WTC11 (cell line): ENCODE measurements at regions of chr3 and their contacts with region 1.

Region 1: GRCh38 chr3:122942937-122943827 is 84.4 kb downstream of the SEMA5B start:
- DNase-seq: peak; percentile 91
- ATAC-seq: peak; percentile 94
- H3K4me3 Mint-ChIP-seq: no peak overlapping the region
- H3K27ac Mint-ChIP-seq: no peak overlapping the region
- H3K4me1 Mint-ChIP-seq: peaks cover 12% of the 10 kb centered on the region
- H3K27me3 Mint-ChIP-seq: peaks cover 7% of the 10 kb centered on the region
- CTCF ChIP-seq: peak; percentile 90

Region 2: GRCh38 chr3:122754929-122755328 is 188.3 kb before region 1 on chr3:
- CTCF ChIA-PET with region 1: interaction called, 15 read pairs
- POLR2A ChIA-PET with region 1: no interaction called
- DNase-seq: no peak
- ATAC-seq: peak; percentile 100
- H3K4me3 Mint-ChIP-seq: no peak overlapping the region
- H3K27ac Mint-ChIP-seq: no peak overlapping the region
- H3K4me1 Mint-ChIP-seq: 0 out of 2 replicates have a peak, but pooled peaks cover 2% of the 10 kb centered on the region
- H3K27me3 Mint-ChIP-seq: no peaks in the 10 kb centered on the region
- CTCF ChIP-seq: peak; percentile 67

Region 3: GRCh38 chr3:122826278-122826677 is 116.9 kb before region 1 on chr3:
- CTCF ChIA-PET with region 1: no interaction called
- POLR2A ChIA-PET with region 1: no interaction called
- DNase-seq: no peak
- ATAC-seq: no peak
- H3K4me3 Mint-ChIP-seq: no peak overlapping the region
- H3K27ac Mint-ChIP-seq: no peak overlapping the region
- H3K4me1 Mint-ChIP-seq: no peaks in the 10 kb centered on the region
- H3K27me3 Mint-ChIP-seq: no peaks in the 10 kb centered on the region
- CTCF ChIP-seq: no peak

Region 4: DNA sequence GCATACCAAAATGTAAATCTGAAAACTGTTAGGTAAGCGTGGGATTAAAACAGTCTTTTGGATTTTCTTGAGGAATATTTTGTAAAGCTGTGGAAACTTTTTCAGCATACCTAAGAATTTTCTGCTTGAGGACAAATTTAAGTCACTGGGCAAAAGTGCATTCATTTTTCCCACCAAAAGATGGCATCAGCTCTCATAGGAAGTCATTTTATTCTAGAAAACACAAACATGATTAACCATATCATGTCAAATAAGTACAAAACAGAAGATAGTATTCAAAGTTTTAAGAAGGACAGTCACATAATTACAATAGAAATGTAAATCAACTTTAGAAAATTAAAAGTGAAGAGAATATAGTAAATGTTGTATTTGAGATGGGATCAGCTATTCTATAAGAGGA is 84.8 kb before region 1 on chr3:
- CTCF ChIA-PET with region 1: no interaction called
- POLR2A ChIA-PET with region 1: no interaction called
- DNase-seq: no peak
- ATAC-seq: no peak
- H3K4me3 Mint-ChIP-seq: no peak overlapping the region
- H3K27ac Mint-ChIP-seq: no peak overlapping the region
- H3K4me1 Mint-ChIP-seq: no peaks in the 10 kb centered on the region
- H3K27me3 Mint-ChIP-seq: no peaks in the 10 kb centered on the region
- CTCF ChIP-seq: no peak

Region 5: DNA sequence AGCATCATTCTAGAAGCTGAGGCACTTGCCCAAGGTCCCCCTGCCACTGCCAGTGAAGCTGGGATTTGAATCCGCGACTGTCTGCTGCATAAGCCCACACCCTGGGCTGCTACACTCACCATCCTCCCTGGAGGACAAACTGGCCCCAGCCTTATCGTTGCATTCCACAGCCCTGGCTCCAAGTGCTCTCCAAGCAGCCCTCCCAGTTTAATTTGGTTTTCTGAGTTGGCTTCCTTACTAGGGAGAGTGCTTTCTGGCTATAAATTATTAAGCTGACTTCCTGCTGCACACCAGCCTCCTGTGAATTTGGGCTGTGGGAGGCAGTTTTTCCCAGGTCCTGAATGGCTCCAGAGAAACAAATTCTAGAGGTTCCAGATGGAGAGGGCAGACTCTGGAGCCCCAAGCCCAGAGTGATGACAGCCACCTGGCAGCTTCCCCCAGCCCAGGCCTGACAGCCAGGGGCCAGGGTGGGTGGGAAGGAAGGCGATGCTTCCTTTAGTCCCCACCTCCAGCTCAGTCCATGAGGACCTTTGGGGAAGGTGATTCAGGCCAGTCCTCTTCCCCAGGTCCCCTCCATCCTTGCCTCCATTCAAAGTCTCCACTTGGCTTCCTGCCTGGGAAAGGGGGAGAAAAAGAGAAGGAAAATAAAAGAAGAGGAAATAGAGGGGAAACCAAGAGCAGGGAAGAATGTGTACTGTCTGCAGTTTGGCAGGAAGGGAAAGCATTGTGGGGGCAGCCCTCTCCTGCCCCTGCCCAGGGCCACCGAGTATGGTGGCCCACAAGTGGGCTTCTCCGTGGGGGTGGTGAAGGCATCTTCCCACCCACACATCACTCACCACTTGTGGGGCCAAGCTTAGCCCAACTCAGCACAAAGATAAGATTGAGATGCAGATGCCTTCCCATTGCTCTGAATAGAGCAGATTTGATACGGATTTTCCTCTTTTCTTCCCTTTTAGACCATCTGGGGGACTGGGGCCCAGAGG is 14.8 kb after region 1 on chr3:
- CTCF ChIA-PET with region 1: interaction called, 28 read pairs
- POLR2A ChIA-PET with region 1: no interaction called
- DNase-seq: no peak
- ATAC-seq: peak; percentile 7; the same call in 1 of the 2 replicates
- H3K4me3 Mint-ChIP-seq: no peak overlapping the region
- H3K27ac Mint-ChIP-seq: no peak overlapping the region
- H3K4me1 Mint-ChIP-seq: peaks cover 55% of the 10 kb centered on the region
- H3K27me3 Mint-ChIP-seq: no peaks in the 10 kb centered on the region
- CTCF ChIP-seq: no peak

Region 6: DNA sequence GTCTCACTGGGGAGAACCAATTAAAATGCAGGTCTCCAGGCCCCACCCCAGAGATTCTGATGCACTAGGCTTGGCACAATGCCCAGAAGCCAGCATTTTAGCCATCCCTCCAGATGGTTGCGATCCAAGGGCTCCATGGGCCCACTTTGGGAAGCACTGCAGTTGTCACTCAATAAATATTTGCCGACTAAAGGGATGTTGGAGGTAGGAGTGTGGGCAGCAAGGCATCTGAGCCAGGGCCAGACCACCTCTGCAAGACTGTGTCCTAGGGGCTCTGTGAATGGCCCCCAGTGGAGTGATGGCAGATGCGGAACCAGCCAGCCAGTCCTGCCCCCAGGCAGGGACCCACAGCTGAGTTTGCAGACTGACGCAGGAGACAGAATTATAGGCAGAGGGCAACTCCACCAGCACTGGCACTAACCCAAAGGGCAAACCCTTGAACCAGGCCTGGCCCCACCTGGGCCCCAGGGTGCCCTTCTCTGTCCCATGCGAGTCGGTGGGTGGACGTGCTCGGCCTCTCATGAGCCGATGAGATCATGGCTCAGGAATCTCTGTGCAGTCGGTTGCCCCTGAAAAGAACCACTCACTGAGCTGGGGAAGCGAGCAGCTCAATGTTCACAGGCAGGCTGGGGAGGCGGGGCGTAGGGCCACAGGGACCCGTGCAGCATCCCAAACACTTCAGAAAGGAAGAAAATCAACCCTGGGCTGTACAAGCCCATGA is 34.7 kb after region 1 on chr3:
- CTCF ChIA-PET with region 1: interaction called, 22 read pairs
- POLR2A ChIA-PET with region 1: no interaction called
- DNase-seq: peak; percentile 39
- ATAC-seq: peak; percentile 54
- H3K4me3 Mint-ChIP-seq: no peak overlapping the region
- H3K27ac Mint-ChIP-seq: no peak overlapping the region
- H3K4me1 Mint-ChIP-seq: peaks cover 71% of the 10 kb centered on the region
- H3K27me3 Mint-ChIP-seq: no peaks in the 10 kb centered on the region; the same call in 1 of the 2 replicates
- CTCF ChIP-seq: no peak

Region 7: GRCh38 chr3:123015557-123015956 is 72.4 kb after region 1 on chr3:
- CTCF ChIA-PET with region 1: interaction called, 37 read pairs
- POLR2A ChIA-PET with region 1: interaction called, 3 read pairs
- DNase-seq: no peak
- ATAC-seq: peak; percentile 70
- H3K4me3 Mint-ChIP-seq: no peak overlapping the region
- H3K27ac Mint-ChIP-seq: no peak overlapping the region
- H3K4me1 Mint-ChIP-seq: peaks cover 12% of the 10 kb centered on the region
- H3K27me3 Mint-ChIP-seq: no peaks in the 10 kb centered on the region
- CTCF ChIP-seq: no peak

Region 8: DNA sequence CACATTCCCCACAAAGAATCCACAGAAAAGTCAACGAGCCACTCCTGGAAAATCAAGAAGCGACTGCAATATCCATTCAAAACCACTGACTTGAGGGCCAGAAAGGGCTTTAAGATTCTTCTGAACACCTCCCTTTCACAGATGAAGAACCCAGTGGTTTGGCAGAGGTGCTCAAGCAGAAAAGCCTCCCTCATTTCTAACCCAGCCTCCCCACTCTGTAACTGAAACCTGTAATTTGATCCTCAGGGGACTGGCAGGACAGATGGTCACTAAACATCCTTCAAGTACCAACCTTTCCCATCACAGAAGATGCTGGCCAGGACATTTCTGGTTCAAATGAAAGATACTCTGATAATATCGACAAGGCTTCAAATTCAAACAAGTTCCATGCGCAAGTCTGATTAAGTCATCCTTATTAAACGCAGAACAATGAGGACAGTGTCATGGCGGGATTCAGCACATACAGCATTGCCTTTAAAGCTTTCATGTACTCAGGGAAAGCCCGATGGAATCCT is 78.9 kb after region 1 on chr3:
- CTCF ChIA-PET with region 1: interaction called, 72 read pairs
- POLR2A ChIA-PET with region 1: no interaction called
- DNase-seq: no peak
- ATAC-seq: no peak
- H3K4me3 Mint-ChIP-seq: peak overlapping the region; percentile 39
- H3K27ac Mint-ChIP-seq: peak overlapping the region; percentile 77; the same call in 1 of the 2 replicates
- H3K4me1 Mint-ChIP-seq: peaks cover 55% of the 10 kb centered on the region
- H3K27me3 Mint-ChIP-seq: peaks cover 28% of the 10 kb centered on the region
- CTCF ChIP-seq: no peak

Region 9: DNA sequence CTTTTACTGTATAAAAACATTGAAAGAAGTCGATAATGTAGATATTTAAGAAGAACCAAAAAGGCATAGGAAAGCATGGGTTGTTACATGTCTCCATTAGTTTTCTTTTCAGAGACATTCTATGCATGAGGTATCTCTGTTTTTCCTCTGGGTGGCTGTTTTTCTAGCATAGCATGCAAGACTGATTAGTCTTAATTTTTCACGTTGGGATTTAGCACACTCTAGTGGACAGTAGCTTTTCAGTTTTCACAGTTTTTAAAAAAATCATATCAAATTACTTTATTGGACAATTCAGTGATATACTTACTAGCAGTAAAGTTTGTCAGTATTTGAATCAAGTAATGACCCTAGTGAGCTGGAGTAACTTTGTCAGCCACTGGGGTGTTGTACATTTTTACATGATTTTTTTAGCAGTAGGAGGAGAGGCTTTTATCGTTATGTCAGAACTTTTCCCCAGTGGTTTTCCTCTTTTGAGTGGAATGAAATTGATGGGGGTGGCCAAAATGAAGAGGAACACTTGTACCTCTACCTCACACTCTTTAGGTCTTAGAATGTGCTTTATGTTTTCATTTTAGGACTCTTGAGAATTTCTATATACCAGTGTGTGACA is 315.7 kb after region 1 on chr3:
- CTCF ChIA-PET with region 1: no interaction called
- POLR2A ChIA-PET with region 1: no interaction called
- DNase-seq: no peak
- ATAC-seq: peak; percentile 38; the same call in 1 of the 2 replicates
- H3K4me3 Mint-ChIP-seq: no peak overlapping the region
- H3K27ac Mint-ChIP-seq: no peak overlapping the region; the same call in 1 of the 2 replicates
- H3K4me1 Mint-ChIP-seq: peaks cover 9% of the 10 kb centered on the region
- H3K27me3 Mint-ChIP-seq: no peaks in the 10 kb centered on the region
- CTCF ChIP-seq: no peak

Region 10: GRCh38 chr3:123286308-123287023 is 343.3 kb after region 1 on chr3:
- CTCF ChIA-PET with region 1: no interaction called
- POLR2A ChIA-PET with region 1: no interaction called
- DNase-seq: peak; percentile 82
- ATAC-seq: peak; percentile 92
- H3K4me3 Mint-ChIP-seq: no peak overlapping the region
- H3K27ac Mint-ChIP-seq: no peak overlapping the region
- H3K4me1 Mint-ChIP-seq: no peaks in the 10 kb centered on the region
- H3K27me3 Mint-ChIP-seq: no peaks in the 10 kb centered on the region
- CTCF ChIP-seq: peak; percentile 72